PC-3 (cell line): ENCODE measurements at regions of chr5 and their contacts with region 1.

Region 1: GRCh38 chr5:17255471-17256021 is 38.1 kb downstream of the BASP1 start:
- DNase-seq: peak; percentile 80
- ATAC-seq: no peak
- H3K4me3 ChIP-seq: no peak overlapping the region
- H3K27ac ChIP-seq: peak overlapping the region; percentile 88
- H3K4me1 ChIP-seq: peaks cover 92% of the 10 kb centered on the region
- H3K27me3 ChIP-seq: no peaks in the 10 kb centered on the region
- CTCF ChIP-seq: no peak

Region 2: DNA sequence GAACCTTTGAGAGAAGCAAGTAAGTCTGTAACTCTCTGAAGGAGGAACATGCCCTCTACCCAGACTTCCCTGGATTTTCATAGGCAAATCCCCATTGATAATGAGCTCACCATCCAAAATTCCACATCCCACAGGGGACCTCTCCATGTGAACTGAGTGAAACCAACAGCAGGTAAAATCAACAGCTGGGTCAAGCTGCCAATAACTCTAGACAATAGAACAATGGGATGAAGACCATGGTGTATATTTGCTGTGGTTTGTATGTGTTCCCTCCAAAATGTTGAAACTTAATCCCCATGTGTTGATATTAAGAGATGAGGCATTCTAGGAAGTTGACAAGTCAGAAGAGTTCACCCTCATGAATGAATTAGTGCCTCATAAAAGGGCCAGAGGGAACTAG is 209.2 kb before region 1 on chr5:
- CTCF ChIA-PET with region 1: no interaction called
- POLR2A ChIA-PET with region 1: no interaction called
- intact Hi-C with region 1: no loop called
- DNase-seq: peak; percentile 44
- ATAC-seq: no peak
- H3K4me3 ChIP-seq: no peak overlapping the region
- H3K27ac ChIP-seq: no peak overlapping the region
- H3K4me1 ChIP-seq: peaks cover 6% of the 10 kb centered on the region; the same call in 1 of the 2 replicates
- H3K27me3 ChIP-seq: no peaks in the 10 kb centered on the region
- CTCF ChIP-seq: no peak

Region 3: GRCh38 chr5:17305964-17306716 is 50.6 kb after region 1 on chr5:
- CTCF ChIA-PET with region 1: no interaction called
- POLR2A ChIA-PET with region 1: no interaction called
- intact Hi-C with region 1: loop called (anchors 5 kb)
- DNase-seq: peak; percentile 93
- ATAC-seq: peak; percentile 88
- H3K4me3 ChIP-seq: peak overlapping the region; percentile 43
- H3K27ac ChIP-seq: peak overlapping the region; percentile 89
- H3K4me1 ChIP-seq: peaks cover 35% of the 10 kb centered on the region
- H3K27me3 ChIP-seq: no peaks in the 10 kb centered on the region
- CTCF ChIP-seq: no peak

Region 4: DNA sequence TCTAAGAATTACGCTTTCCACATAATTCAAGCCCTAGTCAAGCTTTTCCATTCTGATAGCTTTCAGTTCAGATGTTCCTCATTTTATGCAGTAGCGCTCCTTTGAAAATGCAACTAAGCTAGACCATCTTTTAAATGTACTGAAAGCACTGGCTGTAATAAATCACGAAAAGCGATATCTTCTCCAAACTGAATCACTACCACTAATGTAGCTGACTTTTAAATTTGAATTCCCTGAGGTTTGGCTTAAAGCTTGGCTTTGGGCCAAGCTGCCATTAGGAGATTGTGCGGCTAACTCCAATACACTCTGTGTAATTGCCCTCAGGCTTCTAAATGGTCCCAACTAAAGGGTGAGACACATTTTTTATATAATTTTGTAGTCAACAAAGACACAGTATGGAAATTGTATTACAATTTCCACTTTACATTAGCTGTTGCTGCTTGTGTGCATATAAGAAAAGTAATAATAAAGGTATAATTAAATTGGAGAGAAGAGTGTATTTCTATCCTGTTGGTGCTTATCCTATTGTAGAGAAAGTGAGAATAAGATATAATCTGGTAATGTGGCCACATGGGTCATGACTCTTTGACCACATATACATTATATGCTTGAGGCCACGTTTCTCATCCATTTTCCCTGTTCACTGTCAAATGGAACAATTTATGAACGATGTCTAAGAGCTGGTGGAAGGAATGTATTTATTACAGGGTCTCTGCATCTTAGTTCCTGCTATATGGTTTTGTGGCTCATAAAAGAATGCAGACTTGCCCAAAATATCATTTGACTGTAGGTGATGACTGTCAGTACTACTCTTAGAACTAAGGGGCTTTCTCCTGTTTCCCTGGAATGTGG is 123.8 kb after region 1 on chr5:
- CTCF ChIA-PET with region 1: no interaction called
- POLR2A ChIA-PET with region 1: no interaction called
- intact Hi-C with region 1: loop called (anchors 10 kb)
- DNase-seq: peak; percentile 76
- ATAC-seq: no peak
- H3K4me3 ChIP-seq: no peak overlapping the region
- H3K27ac ChIP-seq: no peak overlapping the region
- H3K4me1 ChIP-seq: peaks cover 45% of the 10 kb centered on the region
- H3K27me3 ChIP-seq: no peaks in the 10 kb centered on the region
- CTCF ChIP-seq: no peak